OCI-LY7 (cell line): ENCODE measurements at regions of chr11 and their contacts with region 1.

Region 1: DNA sequence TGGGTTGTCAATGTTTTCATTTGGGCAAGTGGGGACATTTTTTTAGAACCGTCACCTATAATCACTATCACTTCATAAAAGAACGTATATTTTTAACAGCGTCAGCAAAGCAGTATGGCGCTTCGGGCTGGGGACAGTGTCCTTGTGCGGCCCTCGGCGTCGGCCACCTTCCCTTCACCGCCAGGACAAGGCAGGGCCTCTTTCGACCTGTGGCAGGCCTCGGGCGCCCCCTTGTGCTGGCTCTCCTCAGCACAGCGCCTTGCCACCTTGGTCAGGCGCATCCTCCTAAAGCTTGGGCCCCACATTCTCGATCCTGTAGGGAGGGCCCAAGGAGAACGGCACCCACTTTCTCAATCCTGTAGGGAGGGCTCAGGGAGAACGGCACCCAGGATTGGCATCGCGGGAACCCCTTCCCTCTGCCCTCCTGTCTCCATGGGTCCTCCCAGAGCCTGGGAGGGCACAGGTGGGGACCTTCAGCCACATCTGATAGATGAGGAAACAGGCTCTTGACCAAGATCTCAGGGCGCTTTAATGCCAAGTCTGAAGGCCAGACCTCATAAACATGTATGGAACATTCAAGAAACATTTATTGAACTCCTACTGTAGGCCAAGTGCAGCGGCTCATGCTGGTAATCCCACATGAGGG is 11.5 kb upstream of the FADD start:
- DNase-seq: no peak
- H3K4me3 ChIP-seq: no peak overlapping the region
- H3K27ac ChIP-seq: no peak overlapping the region
- H3K4me1 ChIP-seq: no peaks in the 10 kb centered on the region
- CTCF ChIP-seq: peak; percentile 50; the same call in 1 of the 2 replicates

Region 2: GRCh38 chr11:69918938-69919650 is 272.5 kb before region 1 on chr11:
- CTCF ChIA-PET with region 1: no interaction called
- POLR2A ChIA-PET with region 1: no interaction called
- intact Hi-C with region 1: loop called (anchors 1 kb)
- DNase-seq: peak; percentile 66
- H3K4me3 ChIP-seq: no peak overlapping the region
- H3K27ac ChIP-seq: no peak overlapping the region
- H3K4me1 ChIP-seq: no peaks in the 10 kb centered on the region
- CTCF ChIP-seq: peak; percentile 88

Region 3: DNA sequence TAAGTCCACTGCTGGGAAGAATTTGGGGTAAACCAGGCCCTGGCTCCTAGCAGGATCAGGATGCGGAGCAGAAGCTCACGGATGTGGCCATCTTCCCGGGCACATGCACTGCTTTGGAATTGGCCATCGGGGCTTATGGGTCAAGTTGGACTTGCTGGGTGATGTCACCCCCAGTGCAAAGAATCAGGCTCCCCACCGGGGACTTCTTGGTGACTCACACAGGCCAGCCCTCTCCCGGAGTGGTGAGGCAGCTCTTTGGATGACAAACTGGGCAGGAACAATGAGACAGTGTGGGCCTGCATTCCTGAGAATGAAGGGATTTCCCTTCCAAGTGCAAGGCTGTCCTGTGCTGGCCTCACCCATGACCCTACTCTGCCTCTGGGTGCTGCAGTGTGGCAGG is 242.3 kb before region 1 on chr11:
- CTCF ChIA-PET with region 1: no interaction called
- POLR2A ChIA-PET with region 1: no interaction called
- intact Hi-C with region 1: loop called (anchors 10 kb)
- DNase-seq: no peak
- H3K4me3 ChIP-seq: no peak overlapping the region
- H3K27ac ChIP-seq: no peak overlapping the region
- H3K4me1 ChIP-seq: no peaks in the 10 kb centered on the region
- CTCF ChIP-seq: no peak